HEK293 (cell line): ENCODE measurements at regions of chr10 and their contacts with region 1.

Region 1: DNA sequence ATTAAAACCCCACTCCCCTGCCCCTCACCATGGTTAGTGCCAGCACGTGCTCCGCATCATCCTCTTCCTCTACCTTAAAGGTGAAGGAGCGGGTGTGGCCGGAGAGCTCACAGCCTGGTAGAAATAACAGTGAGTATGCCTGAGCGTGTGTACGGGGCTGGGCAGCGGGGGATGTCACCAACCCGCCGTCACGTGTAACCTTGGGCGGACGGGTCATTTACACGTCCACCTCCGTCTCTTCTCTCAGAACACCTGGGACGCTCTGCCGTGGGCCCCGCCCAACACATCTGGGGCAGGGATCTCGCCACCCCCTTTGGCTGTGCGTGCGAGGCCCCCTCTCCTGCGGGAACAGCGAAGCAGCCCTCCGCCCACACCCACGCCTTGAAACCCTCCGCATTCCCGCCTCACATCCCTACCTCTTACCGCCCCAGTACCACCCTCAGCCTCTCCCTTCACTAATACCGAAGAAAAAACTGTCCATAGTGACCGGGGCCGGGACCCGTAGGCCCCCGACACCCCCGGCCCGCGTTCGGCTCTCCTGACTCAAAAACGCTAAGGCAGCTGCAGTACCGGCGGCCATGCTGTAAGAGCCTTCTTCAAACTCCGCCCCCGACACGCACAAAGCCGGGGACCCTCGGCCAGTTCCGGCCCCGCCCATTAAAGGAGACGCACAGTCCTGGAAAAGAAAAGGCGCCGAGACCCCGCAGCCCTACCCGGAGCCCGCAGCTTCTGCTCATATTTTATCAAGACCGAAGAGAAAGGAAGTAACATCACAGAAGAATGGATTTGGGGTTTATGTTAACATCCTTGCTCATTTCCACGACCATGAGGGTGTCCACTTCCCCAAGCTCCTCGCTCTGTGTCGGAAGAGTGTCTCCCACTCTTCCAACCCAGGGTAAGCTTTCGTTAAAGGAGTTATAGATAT is at the start of gene NPM3:
- H3K4me3 ChIP-seq: peak within 1 kb of the TSS; percentile 81
- H3K27ac ChIP-seq: peak within 1 kb of the TSS; percentile 37
- H3K4me1 ChIP-seq: peaks cover 18% of the 10 kb centered on the region
- CTCF ChIP-seq: no peak

Region 2: GRCh38 chr10:101587725-101588653 is 195.1 kb before region 1 on chr10 and contains the starts of genes DPCD and POLL:
- CTCF ChIA-PET with region 1: interaction called, 16 read pairs
- POLR2A ChIA-PET with region 1: interaction called, 3 read pairs
- H3K4me3 ChIP-seq: peak within 1 kb of the TSS; percentile 70
- H3K27ac ChIP-seq: peak within 1 kb of the TSS; percentile 72; the same call in 1 of the 2 replicates
- H3K4me1 ChIP-seq: peaks cover 8% of the 10 kb centered on the region
- CTCF ChIP-seq: no peak

Region 3: DNA sequence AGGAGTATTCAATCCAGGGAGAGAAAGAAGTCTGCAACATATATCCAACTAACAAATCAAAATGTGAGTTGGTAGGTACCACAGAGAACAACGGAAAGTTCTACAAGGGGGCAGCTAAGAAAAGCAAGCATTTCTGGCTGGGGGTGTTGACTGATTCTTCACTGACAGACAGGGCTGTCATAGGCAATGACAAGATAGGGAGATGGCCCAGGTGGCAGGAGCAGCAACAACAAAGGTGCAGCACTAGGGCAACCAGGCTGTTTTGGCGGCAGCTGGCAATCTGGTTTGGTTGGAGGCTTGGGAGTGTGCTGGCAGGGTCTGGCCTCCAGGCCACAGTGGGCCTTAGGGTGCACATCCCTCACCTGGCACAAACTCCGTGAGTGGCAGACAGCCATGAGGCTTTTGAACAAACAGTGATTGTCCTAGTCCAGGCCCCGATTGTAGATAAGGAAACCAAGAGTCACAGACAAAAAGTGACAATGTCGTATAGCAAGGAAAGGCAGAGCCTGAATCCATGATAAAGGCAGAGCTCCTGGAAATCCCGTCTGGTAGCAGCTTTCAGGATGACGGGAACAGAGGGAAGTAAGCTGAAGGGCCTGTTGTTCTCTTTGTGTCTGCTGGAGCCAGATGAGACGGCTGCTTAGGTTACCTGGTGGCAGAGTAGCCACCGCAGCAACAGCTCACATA is 166.5 kb before region 1 on chr10:
- CTCF ChIA-PET with region 1: interaction called, 203 read pairs
- POLR2A ChIA-PET with region 1: no interaction called
- H3K4me3 ChIP-seq: no peak overlapping the region
- H3K27ac ChIP-seq: no peak overlapping the region
- H3K4me1 ChIP-seq: no peaks in the 10 kb centered on the region
- CTCF ChIP-seq: no peak

Region 4: DNA sequence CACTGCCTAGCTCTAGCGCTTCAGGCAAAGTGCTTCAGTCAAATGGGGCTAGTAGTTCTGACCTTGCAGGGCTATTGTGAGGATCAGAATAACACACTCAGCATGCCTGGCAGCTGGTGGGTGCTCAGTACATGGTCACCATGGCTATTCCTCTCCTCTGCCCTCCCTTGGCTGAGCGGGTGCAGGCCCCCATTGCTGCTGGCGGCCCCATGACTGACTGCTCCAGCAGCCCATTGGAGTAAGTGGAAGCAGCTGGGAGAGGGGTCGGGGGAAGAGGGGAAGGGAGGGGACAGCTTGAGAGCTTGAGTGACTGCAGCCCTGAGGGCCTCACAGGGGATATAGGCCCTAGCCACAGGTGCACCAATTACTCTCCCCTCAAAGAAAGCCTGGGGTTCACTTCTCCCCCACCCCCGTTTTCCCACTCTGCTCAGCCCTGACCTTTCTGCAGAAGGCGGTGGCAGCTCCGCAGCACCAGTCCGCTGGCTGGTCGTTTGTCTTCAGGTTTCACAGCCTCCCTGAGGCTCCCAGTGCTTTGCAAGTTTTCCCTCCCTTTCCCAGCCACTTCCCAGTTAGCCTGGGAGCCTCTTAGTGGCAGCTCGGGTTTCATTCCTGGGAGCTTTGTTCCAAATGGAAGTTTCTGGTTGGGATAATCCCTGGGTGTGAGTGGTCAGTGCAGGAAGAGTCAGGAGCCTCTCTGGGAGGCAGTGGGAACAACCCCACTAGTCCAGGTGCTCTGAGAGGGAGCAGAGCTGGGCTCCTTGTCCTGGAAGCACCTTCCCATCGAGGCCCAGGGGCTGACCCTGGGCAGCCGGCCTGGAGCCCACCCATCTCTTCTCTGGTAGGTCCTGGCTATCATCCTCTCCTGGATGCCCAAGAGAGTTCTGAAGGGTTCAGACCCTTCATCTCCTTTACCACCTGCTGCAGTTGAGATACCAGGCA is 23.5 kb before region 1 on chr10:
- CTCF ChIA-PET with region 1: interaction called, 30 read pairs
- POLR2A ChIA-PET with region 1: no interaction called
- H3K4me3 ChIP-seq: no peak overlapping the region
- H3K27ac ChIP-seq: no peak overlapping the region
- H3K4me1 ChIP-seq: peaks cover 8% of the 10 kb centered on the region
- CTCF ChIP-seq: no peak

Region 5: DNA sequence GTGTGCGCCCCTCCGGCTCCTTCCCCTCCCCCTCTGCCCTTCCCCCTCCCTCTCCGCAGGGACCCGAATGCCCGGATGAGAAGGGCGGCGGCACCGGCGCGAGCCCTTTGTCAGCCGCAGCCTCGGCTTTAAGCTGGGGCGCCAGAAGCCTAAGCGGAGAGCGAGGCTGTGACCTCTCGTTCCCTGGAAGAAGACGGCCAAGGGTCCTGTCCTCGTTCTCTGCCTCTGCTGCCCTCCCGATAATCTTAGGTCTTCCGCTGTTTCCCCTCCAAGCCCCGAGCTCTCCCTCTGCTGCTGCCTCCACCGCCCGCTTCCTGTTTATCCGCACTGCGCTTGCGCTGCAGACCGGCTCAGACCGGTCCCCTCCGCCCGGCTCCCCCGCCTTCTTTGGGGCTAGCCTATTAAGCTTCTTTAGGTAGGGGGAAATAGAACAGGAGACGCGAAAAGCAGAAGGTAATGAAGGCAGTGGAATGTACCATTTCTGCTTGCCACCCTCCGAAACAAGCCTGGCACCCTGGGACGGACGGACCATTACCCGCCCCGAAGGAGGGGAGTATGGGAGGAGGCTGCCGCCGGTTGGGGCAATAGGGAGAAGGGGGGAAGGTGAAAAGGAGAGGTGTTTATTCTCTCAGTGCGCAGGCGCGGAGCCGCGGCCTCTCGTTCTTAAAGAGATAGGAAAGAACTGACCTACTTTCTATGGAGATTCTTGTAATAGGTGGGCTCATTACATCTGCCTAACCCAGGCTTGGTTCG is 35.2 kb after region 1 on chr10 and contains the start of gene OGA:
- CTCF ChIA-PET with region 1: interaction called, 10 read pairs
- POLR2A ChIA-PET with region 1: interaction called, 16 read pairs
- H3K4me3 ChIP-seq: peak within 1 kb of the TSS; percentile 92
- H3K27ac ChIP-seq: peak within 1 kb of the TSS; percentile 90
- H3K4me1 ChIP-seq: peaks cover 9% of the 10 kb centered on the region; the same call in 1 of the 2 replicates
- CTCF ChIP-seq: no peak